AG04450 (cell line): ENCODE measurements at regions of chr9 and their contacts with region 1.

Region 1: DNA sequence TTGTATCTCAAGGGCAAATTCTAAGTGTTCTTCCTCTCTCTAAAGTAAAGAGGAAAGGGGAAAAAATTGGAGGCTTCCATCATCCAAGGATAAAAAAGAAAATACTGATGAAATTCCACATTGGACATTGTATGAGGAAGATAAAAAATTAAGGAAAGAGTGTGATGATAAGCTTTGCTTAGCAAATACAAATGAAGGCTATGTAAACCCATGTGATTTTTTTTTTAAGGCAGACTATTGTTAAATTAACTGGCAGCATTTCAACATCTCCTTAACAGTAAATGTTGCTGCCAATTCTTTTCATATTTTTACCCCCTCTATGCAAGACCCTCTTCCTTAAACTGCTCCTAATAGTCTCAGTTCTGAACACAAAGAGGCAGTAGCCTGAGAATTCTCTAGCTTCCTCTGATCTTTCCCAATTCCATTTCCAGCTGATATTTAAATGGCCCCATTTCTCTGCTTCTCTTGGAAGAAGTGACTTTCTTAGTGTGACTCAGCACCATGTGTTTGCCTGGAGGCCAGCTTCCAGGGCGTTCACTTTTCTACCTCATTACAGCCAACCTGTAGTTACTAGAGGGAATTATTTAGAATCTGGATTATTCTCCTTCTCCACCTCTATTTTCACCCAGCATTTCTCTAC is 159.7 kb downstream of the TLE1 start:
- DNase-seq: no peak
- H3K4me3 ChIP-seq: no peak overlapping the region
- H3K27ac ChIP-seq: no peak overlapping the region
- H3K27me3 ChIP-seq: no peaks in the 10 kb centered on the region
- CTCF ChIP-seq: no peak

Region 2: DNA sequence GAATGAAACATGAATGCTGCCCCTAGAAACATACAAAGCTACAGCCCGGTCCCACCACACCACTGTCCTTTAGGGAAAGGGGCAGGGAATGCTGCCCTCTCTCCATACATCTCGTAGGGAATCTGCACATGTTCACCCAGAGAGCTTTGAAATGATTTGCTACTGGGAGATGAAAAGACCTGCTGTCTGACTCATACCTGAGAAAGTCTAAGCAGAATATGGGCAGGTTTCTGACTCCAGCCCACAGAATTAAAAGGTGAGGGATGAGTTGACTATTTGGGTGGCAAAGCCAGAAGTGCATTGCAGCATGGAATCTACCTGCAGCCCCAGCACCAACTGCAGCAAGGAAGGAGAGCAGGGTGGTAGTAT is 138.2 kb before region 1 on chr9:
- CTCF ChIA-PET with region 1: interaction called, 10 read pairs
- POLR2A ChIA-PET with region 1: no interaction called
- DNase-seq: no peak
- H3K4me3 ChIP-seq: no peak overlapping the region
- H3K27ac ChIP-seq: no peak overlapping the region
- H3K27me3 ChIP-seq: no peaks in the 10 kb centered on the region
- CTCF ChIP-seq: no peak

Region 3: GRCh38 chr9:81632599-81632998 is 102.9 kb after region 1 on chr9:
- CTCF ChIA-PET with region 1: no interaction called
- POLR2A ChIA-PET with region 1: no interaction called
- DNase-seq: no peak
- H3K4me3 ChIP-seq: no peak overlapping the region
- H3K27ac ChIP-seq: no peak overlapping the region
- H3K27me3 ChIP-seq: no peaks in the 10 kb centered on the region
- CTCF ChIP-seq: no peak